Heart left ventricle (tissue), 16 donors: ENCODE measurements at regions of chr1 and their contacts with region 1.

Region 1: DNA sequence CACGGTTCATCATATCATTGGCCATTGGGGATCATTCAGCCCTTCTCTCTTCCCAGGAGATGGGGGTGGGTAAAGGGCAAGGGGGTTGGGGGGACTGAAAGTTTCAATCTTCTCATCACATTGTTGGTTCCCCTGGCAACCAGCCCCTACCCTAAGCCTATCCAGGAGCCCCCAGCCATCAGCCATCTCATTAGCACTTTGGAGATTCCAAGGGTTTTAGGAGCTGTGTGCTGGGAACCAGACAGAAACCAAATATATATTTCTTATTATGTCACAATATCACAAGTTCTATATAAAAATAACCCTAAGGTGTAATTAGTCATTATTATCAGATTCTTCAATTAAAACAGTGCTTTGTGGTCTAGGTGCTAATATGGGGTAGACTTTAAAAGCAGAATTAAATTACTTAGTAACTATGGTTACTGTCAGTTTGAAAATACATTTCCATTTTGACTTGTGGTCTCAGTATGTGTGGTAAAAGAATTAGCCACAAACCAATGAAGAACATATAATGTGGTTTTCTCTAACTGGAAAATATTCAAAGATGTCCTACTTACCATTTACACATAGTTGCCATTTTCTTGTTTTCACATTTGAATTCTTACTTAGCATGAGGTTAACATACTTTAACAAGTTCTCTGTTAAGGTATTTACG is 28.1 kb downstream of the IL23R start:
- DNase-seq: no peak
- ATAC-seq: no peak
- H3K4me3 ChIP-seq: no peak overlapping the region
- H3K27ac ChIP-seq: no peak overlapping the region
- H3K4me1 ChIP-seq: peaks cover 0 to 7% (median 0%) of the 10 kb centered on the region in 12 donors
- H3K27me3 ChIP-seq: no peaks in the 10 kb centered on the region
- CTCF ChIP-seq: no peak
- POLR2A ChIP-seq: no peak

Region 2: DNA sequence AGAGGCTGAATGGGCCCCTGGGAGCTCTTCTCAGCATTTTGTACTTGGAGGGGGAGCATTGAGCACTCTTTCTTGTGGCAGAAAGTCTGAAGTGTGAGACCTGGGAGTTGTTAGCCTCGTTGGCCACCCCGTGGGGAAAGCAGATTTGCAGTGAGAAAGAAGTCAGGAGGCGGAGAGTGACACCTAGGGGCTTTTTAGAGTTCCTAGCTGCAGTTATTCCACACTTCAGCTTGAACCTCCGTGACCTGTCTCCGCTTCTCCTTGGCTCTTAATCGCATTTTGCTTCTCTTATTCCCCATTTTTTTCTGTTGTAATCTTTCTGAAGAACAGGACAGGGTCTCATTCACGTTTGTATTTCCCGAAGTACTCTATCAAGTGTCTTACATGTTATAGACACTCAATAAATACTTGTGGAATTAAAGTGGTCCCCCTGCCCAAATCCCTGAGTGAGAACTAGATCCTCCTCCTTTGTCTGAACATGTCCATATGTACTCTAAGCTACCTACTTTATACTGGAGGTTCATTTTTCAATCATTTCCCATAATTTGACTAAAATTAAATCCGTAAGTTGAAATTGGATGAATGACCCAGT is 45.1 kb before region 1 on chr1:
- intact Hi-C with region 1: loop called in 1 of 10 experiments (anchors 10 kb)
- DNase-seq: peak in 4 of 5 donors; percentile 52 to 62 (median 60)
- ATAC-seq: peak in 3 of 4 donors; percentile 90 to 95 (median 90)
- H3K4me3 ChIP-seq: no peak overlapping the region
- H3K27ac ChIP-seq: no peak overlapping the region
- H3K4me1 ChIP-seq: peaks cover 0 to 9% (median 2%) of the 10 kb centered on the region in 12 donors
- H3K27me3 ChIP-seq: peaks cover 0 to 7% (median 0%) of the 10 kb centered on the region in 9 donors
- CTCF ChIP-seq: peak; percentile 49 to 82 (median 77)
- POLR2A ChIP-seq: no peak